ENCODE measurements at regions of chr18 and their contacts with region 1.

Region 1: GRCh38 chr18:50203801-50204604 is 9.1 kb upstream of the MYO5B start:
- DNase-seq: no peak
- ATAC-seq: peak; percentile 68
- H3K4me3 ChIP-seq: no peak overlapping the region
- H3K27ac ChIP-seq: no peak overlapping the region
- H3K4me1 ChIP-seq: no peaks in the 10 kb centered on the region
- H3K27me3 ChIP-seq: peaks cover 1 to 4% of the 10 kb centered on the region in 2 experiments; a peak in 2 of 4 replicates
- CTCF ChIP-seq: peak; percentile 52 to 65 (median 52); a peak in 5 of 6 replicates
- EP300 ChIP-seq: no peak
- POLR2A ChIP-seq: no peak
- RAD21 ChIP-seq: peak; percentile 72

Region 2: DNA sequence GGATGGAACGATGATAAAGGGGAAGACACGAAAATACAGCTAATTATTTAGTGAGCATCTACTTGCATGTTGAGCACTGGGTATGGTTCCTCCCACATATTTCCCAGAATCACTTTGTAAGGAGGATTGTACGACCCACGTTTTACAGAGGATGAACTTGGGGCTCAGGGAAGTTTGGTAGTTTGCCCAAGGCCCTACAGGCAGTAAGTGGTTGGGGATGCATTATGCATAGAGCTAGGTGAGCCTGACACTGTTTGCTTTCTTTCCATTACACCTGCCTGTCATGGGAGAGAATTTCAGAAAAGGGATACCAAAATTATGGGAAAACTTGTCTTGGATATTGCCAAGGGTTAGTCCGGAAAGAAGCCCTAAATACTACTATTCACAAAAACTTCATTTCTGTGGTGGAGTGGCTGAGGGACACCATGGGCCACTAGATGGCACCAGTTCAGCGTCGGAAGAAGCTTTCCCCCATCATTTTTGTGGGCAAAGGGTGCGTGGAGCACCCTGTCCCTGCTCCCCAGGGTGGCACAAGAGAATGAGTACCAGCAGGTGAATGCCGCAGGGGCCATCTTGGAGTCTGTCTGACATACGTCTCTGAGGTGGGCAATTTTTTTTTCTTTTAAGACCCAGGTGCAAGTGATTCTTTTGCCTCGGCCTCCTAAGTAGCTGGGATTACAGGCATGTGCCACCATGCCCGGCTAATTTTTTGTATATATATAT is 693.4 kb before region 1 on chr18:
- CTCF ChIA-PET with region 1: interaction called, 12 read pairs
- POLR2A ChIA-PET with region 1: no interaction called
- RAD21 ChIA-PET with region 1: interaction called, 7 read pairs
- SMC1A ChIA-PET with region 1: interaction called, 6 read pairs
- in situ Hi-C with region 1: no loop called
- intact Hi-C with region 1: loop called (anchors 10 kb)
- DNase-seq: no peak
- ATAC-seq: peak; percentile 92
- H3K4me3 ChIP-seq: no peak overlapping the region
- H3K27ac ChIP-seq: no peak overlapping the region
- H3K4me1 ChIP-seq: no peaks in the 10 kb centered on the region
- H3K27me3 ChIP-seq: no peaks in the 10 kb centered on the region
- CTCF ChIP-seq: peak; percentile 86 to 90 (median 87)
- EP300 ChIP-seq: no peak
- POLR2A ChIP-seq: no peak
- RAD21 ChIP-seq: peak; percentile 82

Region 3: DNA sequence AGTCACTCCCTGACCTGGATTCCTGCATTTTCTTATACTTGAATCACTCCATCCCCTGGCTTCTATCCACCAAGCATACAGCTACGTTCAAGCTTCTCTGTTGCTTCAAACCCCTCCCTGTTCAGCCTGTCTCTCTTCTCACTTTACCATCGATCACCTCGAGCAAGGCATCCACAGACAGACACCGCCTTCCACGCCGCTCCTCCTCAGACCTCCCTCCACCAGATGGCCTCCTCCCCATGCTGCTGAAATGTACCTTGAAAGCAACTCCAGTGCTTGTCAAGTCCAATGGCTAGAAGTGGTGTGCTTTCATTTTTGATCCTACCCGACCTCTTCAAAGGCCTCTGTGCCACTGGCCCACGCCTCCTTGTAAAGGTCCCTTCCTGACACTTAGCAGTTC is 259.3 kb before region 1 on chr18:
- CTCF ChIA-PET with region 1: interaction called, 4 read pairs
- POLR2A ChIA-PET with region 1: no interaction called
- RAD21 ChIA-PET with region 1: interaction called, 9 read pairs
- SMC1A ChIA-PET with region 1: interaction called, 3 read pairs
- in situ Hi-C with region 1: no loop called
- intact Hi-C with region 1: loop called (anchors 10 kb)
- DNase-seq: no peak
- ATAC-seq: peak; percentile 74
- H3K4me3 ChIP-seq: no peak overlapping the region
- H3K27ac ChIP-seq: no peak overlapping the region
- H3K4me1 ChIP-seq: no peaks in the 10 kb centered on the region
- H3K27me3 ChIP-seq: peaks cover 0 to 6% of the 10 kb centered on the region in 2 experiments; a peak in 2 of 4 replicates
- CTCF ChIP-seq: peak in 2 of 3 experiments; percentile 9 to 46; a peak in 3 of 6 replicates
- EP300 ChIP-seq: no peak
- POLR2A ChIP-seq: no peak
- RAD21 ChIP-seq: peak; percentile 42; the same call in 1 of the 2 replicates

Region 4: DNA sequence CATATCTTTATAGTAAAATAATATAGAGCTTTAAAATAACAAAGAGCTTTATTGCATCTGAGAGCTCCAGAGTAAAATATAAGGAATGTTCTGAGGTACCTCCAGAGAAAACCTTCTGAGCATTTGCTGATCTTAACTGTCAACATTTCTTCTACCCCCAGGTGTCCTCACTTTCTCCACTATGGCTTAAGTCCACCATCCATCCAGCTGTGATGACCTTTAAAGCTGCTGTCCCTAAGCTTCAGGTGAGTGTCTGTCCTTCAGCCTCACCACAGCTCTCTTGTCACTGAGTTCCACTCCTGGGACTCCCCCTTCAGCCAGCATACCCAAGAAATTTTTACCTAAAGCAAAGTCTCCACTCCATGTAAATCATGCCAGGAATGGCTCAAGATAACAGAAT is 147.0 kb before region 1 on chr18:
- CTCF ChIA-PET with region 1: interaction called, 12 read pairs
- POLR2A ChIA-PET with region 1: no interaction called
- RAD21 ChIA-PET with region 1: interaction called, 5 read pairs
- SMC1A ChIA-PET with region 1: interaction called, 4 read pairs
- in situ Hi-C with region 1: no loop called
- intact Hi-C with region 1: no loop called
- DNase-seq: no peak
- ATAC-seq: no peak
- H3K4me3 ChIP-seq: no peak overlapping the region
- H3K27ac ChIP-seq: no peak overlapping the region
- H3K4me1 ChIP-seq: no peaks in the 10 kb centered on the region
- H3K27me3 ChIP-seq: no peaks in the 10 kb centered on the region; a peak in 1 of 4 replicates
- CTCF ChIP-seq: 0 out of 6 replicates have a peak, but pooled peaks of 1 of the 3 experiments have one; percentile 9
- EP300 ChIP-seq: no peak
- POLR2A ChIP-seq: no peak
- RAD21 ChIP-seq: peak; percentile 38; the same call in 1 of the 2 replicates

Region 5: GRCh38 chr18:50177294-50177992 is 26.6 kb before region 1 on chr18:
- CTCF ChIA-PET with region 1: interaction called, 12 read pairs
- POLR2A ChIA-PET with region 1: no interaction called
- RAD21 ChIA-PET with region 1: no interaction called
- SMC1A ChIA-PET with region 1: no interaction called
- in situ Hi-C with region 1: no loop called
- intact Hi-C with region 1: no loop called
- DNase-seq: no peak
- ATAC-seq: no peak
- H3K4me3 ChIP-seq: no peak overlapping the region
- H3K27ac ChIP-seq: no peak overlapping the region
- H3K4me1 ChIP-seq: no peaks in the 10 kb centered on the region
- H3K27me3 ChIP-seq: peaks cover 0 to 4% of the 10 kb centered on the region in 2 experiments; a peak in 1 of 4 replicates
- CTCF ChIP-seq: no peak
- EP300 ChIP-seq: no peak
- POLR2A ChIP-seq: no peak
- RAD21 ChIP-seq: no peak

Region 6: GRCh38 chr18:50429207-50429948 is 225.4 kb after region 1 on chr18:
- CTCF ChIA-PET with region 1: interaction called, 27 read pairs
- POLR2A ChIA-PET with region 1: no interaction called
- RAD21 ChIA-PET with region 1: interaction called, 17 read pairs
- SMC1A ChIA-PET with region 1: interaction called, 9 read pairs
- in situ Hi-C with region 1: no loop called
- intact Hi-C with region 1: no loop called
- DNase-seq: no peak
- ATAC-seq: peak; percentile 59
- H3K4me3 ChIP-seq: no peak overlapping the region
- H3K27ac ChIP-seq: no peak overlapping the region
- H3K4me1 ChIP-seq: no peaks in the 10 kb centered on the region
- H3K27me3 ChIP-seq: peaks cover 2 to 3% of the 10 kb centered on the region in 2 experiments; a peak in 2 of 4 replicates
- CTCF ChIP-seq: peak; percentile 35 to 49 (median 39); a peak in 5 of 6 replicates
- EP300 ChIP-seq: no peak
- POLR2A ChIP-seq: no peak
- RAD21 ChIP-seq: peak; percentile 42